Breast epithelium (tissue), 4 donors: ENCODE measurements at regions of chr5 and their contacts with region 1.

Region 1: GRCh38 chr5:38162625-38163024 is 95.7 kb upstream of the EGFLAM start:
- DNase-seq: no peak
- H3K4me3 ChIP-seq: no peak overlapping the region
- H3K27ac ChIP-seq: no peak overlapping the region
- H3K4me1 ChIP-seq: no peaks in the 10 kb centered on the region
- H3K27me3 ChIP-seq: no peaks in the 10 kb centered on the region
- CTCF ChIP-seq: no peak
- POLR2A ChIP-seq: no peak

Region 2: DNA sequence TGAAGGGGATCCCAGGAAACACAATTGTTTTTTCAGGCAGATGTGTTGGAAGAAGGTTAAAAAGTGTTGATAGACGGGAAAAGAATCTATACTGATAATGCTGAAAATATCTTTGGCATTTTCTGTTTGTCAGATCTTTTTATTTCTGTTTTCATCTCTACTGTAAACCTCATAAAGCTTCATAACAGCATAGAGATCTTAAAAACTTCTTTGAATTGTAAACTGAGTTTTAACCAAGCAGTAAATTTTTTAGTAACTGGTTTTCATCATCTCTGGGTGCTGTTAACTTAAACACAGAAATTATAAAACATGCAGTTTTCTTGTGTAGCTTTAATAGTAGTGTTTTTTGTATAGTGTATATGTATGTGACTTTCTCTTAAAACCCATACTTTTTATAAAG is 556.5 kb before region 1 on chr5:
- intact Hi-C with region 1: loop called (anchors 5 kb)
- DNase-seq: no peak
- H3K4me3 ChIP-seq: no peak overlapping the region
- H3K27ac ChIP-seq: no peak overlapping the region
- H3K4me1 ChIP-seq: no peaks in the 10 kb centered on the region
- H3K27me3 ChIP-seq: no peaks in the 10 kb centered on the region
- CTCF ChIP-seq: no peak
- POLR2A ChIP-seq: no peak

Region 3: GRCh38 chr5:38148021-38148625 is 14.5 kb before region 1 on chr5:
- intact Hi-C with region 1: no loop called
- DNase-seq: no peak
- H3K4me3 ChIP-seq: no peak overlapping the region
- H3K27ac ChIP-seq: no peak overlapping the region
- H3K4me1 ChIP-seq: no peaks in the 10 kb centered on the region
- H3K27me3 ChIP-seq: no peaks in the 10 kb centered on the region
- CTCF ChIP-seq: no peak
- POLR2A ChIP-seq: no peak